ENCODE measurements at regions of chr20 and their contacts with region 1.

Region 1: GRCh38 chr20:37282556-37282955 is 6.9 kb upstream of the MANBAL start:
- DNase-seq: no peak
- H3K4me3 ChIP-seq: no peak overlapping the region
- H3K27ac ChIP-seq: no peak overlapping the region
- H3K4me1 ChIP-seq: no peaks in the 10 kb centered on the region
- H3K27me3 ChIP-seq: no peaks in the 10 kb centered on the region
- CTCF ChIP-seq: peak; percentile 29; the same call in 1 of the 2 replicates

Region 2: DNA sequence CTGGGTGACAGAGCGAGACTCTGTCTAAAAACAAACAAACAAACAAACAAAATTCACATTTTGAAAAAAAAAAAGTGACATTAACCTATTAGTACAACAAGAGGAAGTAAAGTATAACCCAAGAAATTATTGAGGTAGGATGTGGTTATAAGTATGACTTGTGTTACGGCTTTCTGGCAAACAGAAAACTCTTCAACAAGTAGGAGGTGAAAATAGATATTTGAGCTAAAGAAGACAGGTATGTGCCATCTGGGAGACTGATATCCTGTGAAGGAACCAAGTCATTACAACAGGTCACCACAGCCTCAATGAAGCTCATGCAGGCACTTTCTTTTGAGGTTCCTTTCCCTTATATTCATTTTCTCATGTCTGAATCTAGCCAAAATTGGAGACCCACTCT is 377.9 kb before region 1 on chr20:
- CTCF ChIA-PET with region 1: no interaction called
- POLR2A ChIA-PET with region 1: no interaction called
- intact Hi-C with region 1: no loop called
- DNase-seq: no peak
- H3K4me3 ChIP-seq: no peak overlapping the region
- H3K27ac ChIP-seq: no peak overlapping the region
- H3K4me1 ChIP-seq: no peaks in the 10 kb centered on the region
- H3K27me3 ChIP-seq: no peaks in the 10 kb centered on the region
- CTCF ChIP-seq: no peak

Region 3: DNA sequence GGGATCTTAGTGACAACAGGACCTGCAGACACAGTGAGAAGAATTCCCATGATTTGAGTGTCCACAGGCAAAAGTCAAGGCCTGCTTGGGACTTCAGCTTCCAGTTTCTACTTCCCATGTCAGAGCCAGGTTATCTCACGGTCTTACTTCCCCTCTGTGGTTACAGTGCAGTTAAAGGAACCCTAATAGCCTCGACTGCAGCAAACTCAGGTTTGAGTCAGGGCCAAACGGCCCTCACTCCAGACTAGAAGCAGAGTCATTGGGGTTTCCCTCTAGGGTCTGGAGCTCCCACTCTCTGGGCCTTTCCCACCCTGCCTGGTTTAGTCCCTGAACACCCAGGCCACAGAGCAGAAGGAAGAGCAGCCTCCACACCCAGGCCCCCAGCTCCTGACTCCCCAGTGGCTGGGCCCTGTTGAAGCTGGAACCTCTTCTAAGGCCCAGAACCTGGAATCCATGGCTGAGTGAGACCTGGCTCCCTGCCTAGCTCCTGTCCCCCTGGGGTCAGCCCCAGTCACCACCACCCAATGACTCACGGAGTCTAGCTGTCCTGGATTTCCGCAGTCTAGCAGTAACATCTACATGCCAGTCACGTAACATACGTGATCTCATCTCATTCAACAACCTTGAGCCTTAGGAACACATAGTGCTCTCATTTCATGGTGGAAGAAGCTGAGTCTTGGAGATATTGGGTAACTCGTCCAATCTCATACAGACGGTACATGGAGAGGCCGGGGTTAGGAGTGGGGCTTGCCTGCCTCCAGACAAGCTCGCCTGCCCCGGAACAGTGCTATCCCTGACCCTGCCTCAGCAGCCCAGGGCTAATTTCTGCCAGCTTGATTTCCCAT is 11.8 kb before region 1 on chr20:
- CTCF ChIA-PET with region 1: interaction called, 3 read pairs
- POLR2A ChIA-PET with region 1: interaction called, 31 read pairs
- intact Hi-C with region 1: no loop called
- DNase-seq: no peak
- H3K4me3 ChIP-seq: no peak overlapping the region
- H3K27ac ChIP-seq: no peak overlapping the region
- H3K4me1 ChIP-seq: no peaks in the 10 kb centered on the region
- H3K27me3 ChIP-seq: no peaks in the 10 kb centered on the region
- CTCF ChIP-seq: no peak

Region 4: DNA sequence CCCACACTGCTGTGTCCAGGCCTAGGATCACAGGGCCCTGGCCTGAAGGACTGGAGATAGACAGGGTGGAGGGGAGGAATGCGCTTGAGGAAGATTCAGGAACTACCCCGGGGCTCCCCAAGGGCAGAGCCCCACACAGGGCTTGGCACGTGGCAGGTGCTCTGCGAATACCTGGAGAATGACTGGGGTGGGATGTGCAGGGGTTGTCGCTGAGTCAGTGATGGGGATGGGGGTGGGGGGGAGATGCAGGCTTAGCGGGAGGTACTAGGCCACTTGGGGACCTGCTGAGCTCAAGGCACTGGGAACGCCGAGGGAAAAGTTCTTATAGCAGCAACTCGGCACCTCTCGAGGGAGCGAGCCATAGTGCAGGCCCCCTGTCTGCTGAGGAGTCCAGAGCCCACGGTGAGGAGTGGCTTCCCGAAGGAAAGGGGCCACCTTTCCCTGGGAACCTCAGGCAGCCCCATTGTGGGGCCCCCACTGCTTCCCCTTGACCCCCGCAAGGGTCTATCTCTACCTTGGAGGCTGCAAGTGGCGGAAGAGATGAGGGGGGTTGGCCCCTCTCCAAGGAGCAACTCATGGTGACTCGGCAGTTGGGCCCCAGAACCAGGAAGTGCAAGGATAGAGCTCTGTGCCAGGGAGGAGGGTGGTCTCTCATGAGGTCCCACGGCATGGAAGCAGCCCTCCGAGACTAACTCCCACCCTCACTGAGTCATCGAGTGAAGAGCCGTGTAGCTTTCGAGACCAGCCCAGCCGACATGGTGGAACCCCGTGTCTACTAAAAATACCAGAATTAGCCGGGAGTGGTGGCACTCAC is 96.4 kb after region 1 on chr20:
- CTCF ChIA-PET with region 1: interaction called, 15 read pairs
- POLR2A ChIA-PET with region 1: no interaction called
- intact Hi-C with region 1: no loop called
- DNase-seq: peak in 1 of 2 experiments; percentile 72
- H3K4me3 ChIP-seq: no peak overlapping the region
- H3K27ac ChIP-seq: peak overlapping the region; percentile 60
- H3K4me1 ChIP-seq: peaks cover 21% of the 10 kb centered on the region
- H3K27me3 ChIP-seq: no peaks in the 10 kb centered on the region
- CTCF ChIP-seq: no peak

Region 5: DNA sequence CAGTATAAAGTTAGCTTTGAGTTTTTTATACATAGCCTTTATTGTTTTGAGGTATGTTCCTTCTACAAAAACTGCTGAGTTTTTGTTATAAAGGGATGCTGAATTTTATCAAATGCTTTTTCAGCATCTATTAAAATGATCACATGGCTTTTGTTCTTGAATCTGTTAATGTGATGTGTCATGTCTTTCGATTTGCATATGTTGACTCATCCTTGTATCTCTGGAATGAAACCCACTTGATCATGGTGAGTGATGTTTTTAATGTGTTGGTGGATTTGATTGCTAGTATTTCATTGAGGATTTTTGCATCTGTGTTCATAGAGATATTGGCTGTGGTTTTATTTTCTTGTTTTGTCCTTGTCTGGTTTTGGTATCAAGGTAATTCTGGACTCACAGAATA is 269.9 kb after region 1 on chr20:
- CTCF ChIA-PET with region 1: interaction called, 13 read pairs
- POLR2A ChIA-PET with region 1: no interaction called
- intact Hi-C with region 1: no loop called
- DNase-seq: no peak
- H3K4me3 ChIP-seq: no peak overlapping the region
- H3K27ac ChIP-seq: no peak overlapping the region
- H3K4me1 ChIP-seq: no peaks in the 10 kb centered on the region
- H3K27me3 ChIP-seq: no peaks in the 10 kb centered on the region
- CTCF ChIP-seq: no peak

Measured in PC-9 (cell line).